Body of pancreas (tissue), 4 donors: ENCODE measurements at regions of chr7 and their contacts with region 1.

Region 1: DNA sequence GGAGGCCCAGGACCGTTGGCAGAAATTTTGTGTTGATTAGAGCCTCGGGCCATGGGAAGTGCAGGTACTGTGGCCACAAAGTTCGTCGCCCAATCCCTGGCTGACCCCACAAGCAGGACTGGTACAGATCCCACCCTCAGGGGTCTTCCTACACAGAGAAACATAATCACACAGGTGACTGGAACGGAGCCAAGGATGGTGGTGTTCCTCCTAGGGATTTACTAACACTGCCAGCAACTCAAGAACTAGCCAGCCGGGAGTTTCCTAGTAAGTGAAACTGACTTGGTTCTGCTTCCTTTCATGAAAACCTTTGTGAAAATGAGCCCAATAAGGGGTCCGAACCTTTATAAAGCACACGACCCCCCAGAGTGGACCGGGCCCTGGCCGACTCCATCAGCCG is 5.7 kb downstream of the CUX1 start:
- DNase-seq: peak in 3 of 4 donors; percentile 11 to 14 (median 14)
- ATAC-seq: no peak
- H3K4me3 ChIP-seq: no peak overlapping the region
- H3K27ac ChIP-seq: no peak overlapping the region
- H3K4me1 ChIP-seq: peaks cover 17% of the 10 kb centered on the region
- H3K27me3 ChIP-seq: no peaks in the 10 kb centered on the region
- CTCF ChIP-seq: no peak
- POLR2A ChIP-seq: no peak

Region 2: DNA sequence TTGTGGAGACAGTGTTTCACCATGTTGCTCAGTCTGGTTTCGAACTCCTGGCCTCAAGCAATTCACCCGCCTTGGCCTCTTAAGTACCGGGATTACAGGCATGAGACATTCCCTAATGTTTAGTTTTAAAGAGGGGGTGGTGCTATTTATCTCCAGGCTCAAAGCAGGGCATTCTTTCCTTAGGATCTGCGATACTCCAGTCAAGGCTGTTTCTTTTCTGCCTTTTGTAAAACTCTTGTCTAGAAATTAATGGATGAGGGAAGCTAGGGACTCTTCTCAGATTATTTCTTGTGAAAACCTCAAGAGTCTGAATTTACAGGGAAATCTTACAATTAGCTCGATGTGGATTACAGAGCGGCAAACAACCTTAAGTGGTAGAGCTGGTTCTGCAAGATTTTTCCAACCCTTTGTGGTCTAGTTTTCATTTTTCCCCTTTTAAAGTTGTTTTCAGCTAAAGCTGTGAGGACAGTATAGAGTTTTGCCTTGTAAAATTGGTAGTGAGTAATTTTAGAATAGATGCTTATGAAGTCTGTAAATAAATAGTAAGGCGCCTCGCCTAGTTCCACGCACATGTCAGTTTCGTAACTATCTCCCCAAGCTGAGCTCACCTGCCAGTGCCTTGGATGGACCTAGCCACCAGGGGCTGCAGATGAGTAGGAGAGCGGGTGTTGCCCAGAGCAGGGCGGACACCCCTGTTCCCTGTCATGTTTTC is 47.4 kb after region 1 on chr7:
- intact Hi-C with region 1: loop called (anchors 10 kb)
- DNase-seq: peak in 1 of 4 donors; percentile 30
- ATAC-seq: peak; percentile 47
- H3K4me3 ChIP-seq: no peak overlapping the region
- H3K27ac ChIP-seq: peak overlapping the region in 3 of 4 donors; percentile 15 to 50 (median 47)
- H3K4me1 ChIP-seq: peaks cover 24% of the 10 kb centered on the region
- H3K27me3 ChIP-seq: no peaks in the 10 kb centered on the region
- CTCF ChIP-seq: peak in 4 of 7 experiments; percentile 11 to 23 (median 20)
- POLR2A ChIP-seq: no peak